Naive thymus-derived CD4-positive, alpha-beta T cell (primary cell): ENCODE measurements at regions of chr12 and their contacts with region 1.

Region 1: DNA sequence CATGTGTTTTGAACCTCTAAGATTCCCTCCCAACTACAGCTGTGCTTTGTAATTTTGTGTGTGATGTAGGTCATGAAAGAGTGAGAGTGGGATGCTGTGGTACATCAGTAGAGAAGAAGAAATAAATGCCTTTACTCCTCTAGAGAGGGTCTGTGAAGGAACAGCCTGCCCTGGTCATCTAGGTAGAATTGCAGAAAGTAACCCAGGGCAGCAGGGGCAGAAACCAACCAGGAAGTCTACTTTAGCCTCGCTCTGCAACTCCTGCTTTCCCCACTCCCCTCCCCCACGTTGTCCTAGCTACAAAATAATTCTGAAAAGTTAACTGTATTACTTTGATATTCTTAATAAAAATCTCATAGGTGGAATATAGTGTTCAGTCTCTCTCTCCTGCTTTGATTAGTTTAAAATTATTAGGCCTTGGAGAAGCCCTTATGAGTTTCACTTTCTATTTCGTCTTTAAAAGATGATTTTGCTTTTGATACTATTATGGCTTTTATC is 7.5 kb downstream of the TBK1 start:
- DNase-seq: peak in 3 of 9 donors; percentile 16 to 25 (median 19)
- ATAC-seq: peak; percentile 66
- H3K4me3 ChIP-seq: peak overlapping the region; percentile 68
- H3K4me3 Mint-ChIP-seq: peak overlapping the region; percentile 80 to 90 (median 86)
- H3K27ac ChIP-seq: peak overlapping the region; percentile 69
- H3K27ac Mint-ChIP-seq: peak overlapping the region; percentile 87 to 98 (median 94)
- H3K4me1 ChIP-seq: peaks cover 10 to 25% of the 10 kb centered on the region in 2 donors
- H3K4me1 Mint-ChIP-seq: peaks cover 24 to 44% (median 39%) of the 10 kb centered on the region in 7 donors
- H3K27me3 ChIP-seq: no peaks in the 10 kb centered on the region
- H3K27me3 Mint-ChIP-seq: no peaks in the 10 kb centered on the region

Region 2: DNA sequence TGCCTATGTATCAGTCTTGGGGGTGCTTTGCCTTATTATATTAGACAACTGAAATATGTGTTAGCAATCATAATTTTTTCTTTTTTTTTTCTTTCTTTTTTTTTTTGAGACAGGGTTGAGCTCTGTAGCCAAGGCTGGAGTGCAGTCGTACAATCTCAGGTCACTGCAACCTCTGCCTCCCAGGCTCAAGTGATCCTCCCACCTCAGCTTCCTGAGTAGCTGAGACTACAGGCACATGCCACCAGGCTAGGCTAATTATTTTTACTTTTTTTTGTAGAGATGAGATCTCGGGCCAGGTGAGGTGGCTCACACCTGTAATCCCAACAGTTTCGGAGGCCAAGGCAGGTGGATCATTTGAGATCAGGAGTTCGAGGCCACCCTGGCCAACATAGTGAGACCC is 102.1 kb before region 1 on chr12:
- CTCF ChIA-PET with region 1: no interaction called
- POLR2A ChIA-PET with region 1: no interaction called
- intact Hi-C with region 1: no loop called
- DNase-seq: no peak
- ATAC-seq: no peak
- H3K4me3 ChIP-seq: no peak overlapping the region
- H3K4me3 Mint-ChIP-seq: no peak overlapping the region
- H3K27ac ChIP-seq: no peak overlapping the region
- H3K27ac Mint-ChIP-seq: no peak overlapping the region
- H3K4me1 ChIP-seq: no peaks in the 10 kb centered on the region
- H3K4me1 Mint-ChIP-seq: no peaks in the 10 kb centered on the region
- H3K27me3 ChIP-seq: no peaks in the 10 kb centered on the region
- H3K27me3 Mint-ChIP-seq: no peaks in the 10 kb centered on the region

Region 3: DNA sequence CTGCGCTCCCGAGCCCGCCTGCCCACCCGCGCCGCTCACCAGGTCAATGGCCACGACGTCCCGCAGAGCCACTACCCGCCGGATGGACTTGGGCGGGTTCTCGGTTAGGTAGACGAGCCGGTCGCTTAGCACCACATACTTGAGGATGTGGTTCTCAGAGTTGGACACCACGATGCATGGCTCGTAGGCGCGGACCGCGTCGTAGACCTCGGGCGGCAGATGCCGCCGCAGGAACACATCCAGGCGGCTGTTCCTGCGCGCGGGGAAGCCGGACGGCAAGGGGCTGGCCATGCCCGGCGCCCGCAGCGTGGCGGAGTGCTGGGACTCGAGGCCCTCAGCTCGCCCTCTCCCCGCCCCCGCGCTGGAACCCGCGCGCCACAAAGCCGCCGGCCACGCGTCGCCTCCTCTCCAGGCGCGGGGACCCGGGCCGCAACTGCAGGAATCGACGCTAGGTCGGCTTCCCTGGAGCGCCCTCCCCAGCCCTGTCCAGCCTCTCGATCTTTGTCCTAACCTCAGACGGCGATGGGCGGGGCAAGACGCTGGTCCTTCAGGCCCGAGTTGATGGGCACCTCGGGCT is 69.1 kb before region 1 on chr12 and contains the start of gene C12orf56:
- CTCF ChIA-PET with region 1: no interaction called
- POLR2A ChIA-PET with region 1: no interaction called
- intact Hi-C with region 1: no loop called
- DNase-seq: peak in 4 of 9 donors; percentile 14 to 37 (median 16)
- ATAC-seq: peak; percentile 56
- H3K4me3 ChIP-seq: peak within 1 kb of the TSS; percentile 58
- H3K4me3 Mint-ChIP-seq: peak within 1 kb of the TSS; percentile 81 to 90 (median 86)
- H3K27ac ChIP-seq: no peak within 1 kb of the TSS
- H3K27ac Mint-ChIP-seq: peak within 1 kb of the TSS in 6 of 9 donors; percentile 62 to 88 (median 69)
- H3K4me1 ChIP-seq: peaks cover 0 to 7% of the 10 kb centered on the region in 2 donors
- H3K4me1 Mint-ChIP-seq: peaks cover 12 to 39% (median 25%) of the 10 kb centered on the region in 7 donors
- H3K27me3 ChIP-seq: no peaks in the 10 kb centered on the region
- H3K27me3 Mint-ChIP-seq: peaks cover 0 to 22% (median 0%) of the 10 kb centered on the region in 5 donors
- total RNA-seq, gene C12orf56: 0.10 to 0.34 TPM in 2 of 5 experiments, not detected in the others

Region 4: GRCh38 chr12:64491718-64492117 is 32.3 kb after region 1 on chr12:
- CTCF ChIA-PET with region 1: no interaction called
- POLR2A ChIA-PET with region 1: no interaction called
- intact Hi-C with region 1: loop called in 1 of 2 experiments (anchors 1 kb)
- DNase-seq: no peak
- ATAC-seq: no peak
- H3K4me3 ChIP-seq: no peak overlapping the region
- H3K4me3 Mint-ChIP-seq: no peak overlapping the region
- H3K27ac ChIP-seq: no peak overlapping the region
- H3K27ac Mint-ChIP-seq: no peak overlapping the region
- H3K4me1 ChIP-seq: peaks cover 0 to 9% of the 10 kb centered on the region in 2 donors
- H3K4me1 Mint-ChIP-seq: peaks cover 0 to 18% (median 7%) of the 10 kb centered on the region in 7 donors
- H3K27me3 ChIP-seq: no peaks in the 10 kb centered on the region
- H3K27me3 Mint-ChIP-seq: no peaks in the 10 kb centered on the region